HCT116 (cell line): ENCODE measurements at regions of chr9 and their contacts with region 1.

Region 1: GRCh38 chr9:6880626-6881025 is 122.9 kb downstream of the KDM4C start:
- DNase-seq: no peak
- ATAC-seq: no peak
- H3K4me3 ChIP-seq: no peak overlapping the region
- H3K27ac ChIP-seq: no peak overlapping the region
- H3K4me1 ChIP-seq: no peaks in the 10 kb centered on the region
- H3K27me3 ChIP-seq: no peaks in the 10 kb centered on the region
- CTCF ChIP-seq: no peak
- POLR2A ChIP-seq: no peak
- RAD21 ChIP-seq: no peak

Region 2: DNA sequence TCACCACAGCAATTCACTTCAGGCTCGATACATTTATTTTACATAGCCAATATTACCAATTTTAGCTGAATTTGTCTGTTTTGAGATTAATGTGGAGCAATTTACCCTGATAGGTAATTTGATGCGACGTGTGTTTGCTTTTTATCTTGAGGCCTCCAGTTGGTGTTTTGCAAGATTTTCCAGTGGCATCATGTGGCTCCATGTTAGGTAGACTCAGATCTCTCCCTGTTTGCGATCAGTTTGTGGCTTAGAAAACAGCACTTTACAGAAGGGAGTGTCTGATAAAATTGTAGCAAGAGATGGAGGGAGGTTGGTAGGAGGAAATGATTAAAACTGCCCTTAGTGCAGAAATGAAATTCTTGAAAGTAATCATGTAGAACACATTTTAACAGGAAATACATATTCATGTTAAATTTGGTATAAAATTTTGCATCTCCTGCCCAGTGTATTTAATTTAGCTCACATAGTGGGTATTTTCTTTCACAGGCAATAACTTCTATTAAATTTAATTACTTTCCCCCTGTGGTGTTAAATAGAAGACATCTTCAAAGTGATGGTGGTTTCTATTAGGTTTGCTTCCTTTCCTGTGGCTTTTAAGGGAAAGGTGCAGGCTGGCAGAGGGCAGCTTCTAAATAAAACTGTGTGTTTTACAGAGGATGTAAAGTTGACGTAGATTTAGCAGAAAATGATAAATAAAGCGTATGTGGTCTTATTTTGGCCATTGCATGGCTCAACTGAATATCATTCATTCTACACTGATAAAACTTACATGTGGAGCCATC is 12.9 kb after region 1 on chr9:
- CTCF ChIA-PET with region 1: no interaction called
- POLR2A ChIA-PET with region 1: no interaction called
- RAD21 ChIA-PET with region 1: no interaction called
- intact Hi-C with region 1: loop called (anchors 1 kb)
- DNase-seq: no peak
- ATAC-seq: no peak
- H3K4me3 ChIP-seq: no peak overlapping the region
- H3K27ac ChIP-seq: no peak overlapping the region
- H3K4me1 ChIP-seq: peaks cover 0 to 4% of the 10 kb centered on the region in 2 experiments; a peak in 1 of 4 replicates
- H3K27me3 ChIP-seq: no peaks in the 10 kb centered on the region
- CTCF ChIP-seq: no peak
- POLR2A ChIP-seq: no peak
- RAD21 ChIP-seq: no peak

Region 3: GRCh38 chr9:7259544-7260241 is 379.1 kb after region 1 on chr9:
- CTCF ChIA-PET with region 1: no interaction called
- POLR2A ChIA-PET with region 1: no interaction called
- RAD21 ChIA-PET with region 1: no interaction called
- intact Hi-C with region 1: no loop called
- DNase-seq: no peak
- ATAC-seq: no peak
- H3K4me3 ChIP-seq: no peak overlapping the region
- H3K27ac ChIP-seq: no peak overlapping the region
- H3K4me1 ChIP-seq: no peaks in the 10 kb centered on the region
- H3K27me3 ChIP-seq: peaks cover 20% of the 10 kb centered on the region
- CTCF ChIP-seq: 0 out of 6 replicates have a peak, but pooled peaks of 1 of the 3 experiments have one; percentile 10
- POLR2A ChIP-seq: no peak
- RAD21 ChIP-seq: peak; percentile 32